AG04450 (cell line): ENCODE measurements at regions of chr5 and their contacts with region 1.

Region 1: DNA sequence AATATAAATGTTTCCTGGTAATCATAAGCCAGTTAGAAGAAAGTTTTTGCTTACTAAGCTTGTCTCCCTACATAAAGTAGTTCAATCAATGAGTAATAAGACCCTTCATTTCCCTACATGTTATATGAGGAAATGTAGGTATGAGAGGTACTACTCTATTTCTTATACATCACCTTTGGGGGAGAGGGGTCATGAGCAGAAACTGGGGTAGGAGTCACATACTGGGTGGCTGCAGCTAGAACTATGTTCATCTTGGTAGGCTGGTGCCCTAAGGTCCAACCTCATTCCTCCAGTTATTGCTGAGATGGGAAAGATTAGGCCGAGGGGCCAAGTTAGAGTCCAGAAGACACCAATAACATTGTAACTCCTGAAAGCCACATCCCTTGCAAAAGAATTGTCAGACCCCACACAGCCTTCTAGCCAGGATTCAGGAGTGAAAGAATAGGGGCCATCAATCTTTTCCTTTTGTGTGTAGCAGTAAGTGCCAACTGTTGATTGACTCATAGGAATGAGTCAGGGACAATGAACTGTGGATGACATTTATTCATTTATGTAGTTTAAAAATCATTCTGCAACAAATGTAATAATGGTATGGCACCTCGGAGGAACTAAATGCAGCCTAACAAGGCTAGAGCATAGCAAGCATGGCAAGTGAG is 21.6 kb upstream of the SREK1 start:
- DNase-seq: no peak
- H3K4me3 ChIP-seq: no peak overlapping the region
- H3K27ac ChIP-seq: no peak overlapping the region
- H3K27me3 ChIP-seq: no peaks in the 10 kb centered on the region
- CTCF ChIP-seq: no peak

Region 2: GRCh38 chr5:66151030-66151429 is 28.5 kb after region 1 on chr5:
- CTCF ChIA-PET with region 1: interaction called, 10 read pairs
- POLR2A ChIA-PET with region 1: no interaction called
- DNase-seq: no peak
- H3K4me3 ChIP-seq: no peak overlapping the region
- H3K27ac ChIP-seq: no peak overlapping the region
- H3K27me3 ChIP-seq: no peaks in the 10 kb centered on the region
- CTCF ChIP-seq: no peak